ENCODE measurements at regions of chr2 and their contacts with region 1.

Region 1: DNA sequence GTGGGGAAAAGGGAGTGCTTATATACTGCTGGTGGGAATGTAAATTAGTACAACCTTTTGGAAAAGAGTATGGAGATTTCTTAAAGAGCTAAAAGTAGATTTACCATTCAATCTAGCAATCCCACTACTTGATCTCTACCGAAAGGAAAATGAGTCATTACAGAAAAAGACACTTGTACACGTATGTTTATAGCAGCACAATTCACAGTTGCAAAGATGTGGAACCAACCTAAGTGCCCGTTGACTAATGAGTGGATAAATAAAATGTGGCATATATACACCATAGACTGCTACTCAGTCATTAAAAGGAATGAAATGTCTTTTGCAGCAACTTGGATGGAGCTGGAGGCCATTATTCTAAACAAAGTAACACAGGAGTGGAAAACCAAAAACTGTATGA is 29.5 kb downstream of the FLACC1 start:
- DNase-seq: no peak
- H3K4me3 ChIP-seq: no peak overlapping the region
- H3K27ac ChIP-seq: no peak overlapping the region
- H3K4me1 ChIP-seq: no peaks in the 10 kb centered on the region
- H3K27me3 ChIP-seq: no peaks in the 10 kb centered on the region
- CTCF ChIP-seq: no peak

Region 2: DNA sequence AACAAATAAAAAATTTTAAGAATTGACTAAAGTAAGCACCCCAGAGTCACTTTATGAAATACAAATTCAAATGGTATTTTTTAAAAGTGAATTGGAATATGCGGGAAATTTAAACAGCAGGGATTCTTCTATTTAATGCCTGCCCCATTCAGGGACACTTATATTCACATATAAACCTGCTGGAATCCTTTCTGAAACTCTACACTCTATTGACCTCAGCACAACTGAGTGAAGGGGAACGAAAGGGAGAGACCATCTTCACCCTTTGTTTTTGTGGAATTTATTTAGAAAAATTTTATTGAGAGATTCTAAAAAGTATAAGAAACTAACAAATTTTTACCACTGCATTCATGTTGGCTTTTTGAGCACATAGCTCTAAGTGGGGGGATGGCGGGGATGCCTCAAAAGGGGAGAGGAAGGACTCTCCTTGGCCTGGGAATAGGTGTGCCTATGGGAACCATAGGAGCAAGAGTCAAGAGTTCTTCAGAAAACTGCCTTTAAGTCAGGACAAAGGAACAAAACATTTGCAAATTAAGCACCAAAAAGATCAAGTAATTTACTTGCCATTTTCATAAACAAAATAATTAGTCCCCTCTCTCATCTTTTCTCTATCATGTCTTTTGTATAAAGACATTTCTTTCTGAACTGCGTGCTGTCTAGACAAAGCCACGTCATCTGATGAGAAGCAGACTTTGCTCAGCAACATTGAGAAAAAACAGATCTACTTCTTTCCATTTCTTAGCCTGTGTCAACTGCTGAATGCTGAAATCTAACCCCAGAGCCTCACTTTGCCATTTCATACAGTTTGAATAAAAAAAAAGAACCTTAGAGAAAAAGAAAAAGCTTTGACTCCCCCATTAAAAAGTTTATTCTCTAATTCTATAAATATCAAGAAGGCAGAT is 51.1 kb after region 1 on chr2:
- CTCF ChIA-PET with region 1: no interaction called
- dilution Hi-C with region 1: no loop called
- in situ Hi-C with region 1: no loop called
- intact Hi-C with region 1: loop called (anchors 2 kb)
- DNase-seq: no peak
- H3K4me3 ChIP-seq: no peak overlapping the region
- H3K27ac ChIP-seq: no peak overlapping the region
- H3K4me1 ChIP-seq: peaks cover 13% of the 10 kb centered on the region
- H3K27me3 ChIP-seq: no peaks in the 10 kb centered on the region
- CTCF ChIP-seq: no peak

Region 3: DNA sequence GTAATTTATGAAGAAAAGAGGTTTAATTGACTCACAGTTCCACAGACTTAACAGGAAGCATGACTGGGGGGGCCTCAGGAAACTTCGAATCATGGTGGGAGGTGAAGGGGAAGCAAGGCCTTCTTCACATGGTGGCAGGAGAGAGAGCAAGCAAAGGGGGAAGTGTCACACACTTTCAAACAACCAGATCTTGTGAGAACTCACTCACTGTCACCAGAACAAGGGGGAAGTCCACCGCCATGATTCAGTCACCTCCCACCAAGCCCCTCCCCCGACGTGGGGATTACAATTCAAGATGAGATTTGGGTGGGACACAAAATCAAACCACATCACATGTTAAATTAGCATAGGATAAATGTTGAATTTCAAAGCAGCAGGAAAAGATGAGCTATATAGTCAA is 180.0 kb after region 1 on chr2:
- CTCF ChIA-PET with region 1: no interaction called
- dilution Hi-C with region 1: no loop called
- in situ Hi-C with region 1: no loop called
- intact Hi-C with region 1: no loop called
- DNase-seq: no peak
- H3K4me3 ChIP-seq: no peak overlapping the region
- H3K27ac ChIP-seq: no peak overlapping the region
- H3K4me1 ChIP-seq: no peaks in the 10 kb centered on the region
- H3K27me3 ChIP-seq: no peaks in the 10 kb centered on the region
- CTCF ChIP-seq: no peak